Right ventricle myocardium inferior (tissue), 1 donor: ENCODE measurements at regions of chr3 and their contacts with region 1.

Region 1: GRCh38 chr3:142394921-142395622 is 52.8 kb downstream of the XRN1 start:
- DNase-seq: no peak
- ATAC-seq: peak; percentile 68

Region 2: DNA sequence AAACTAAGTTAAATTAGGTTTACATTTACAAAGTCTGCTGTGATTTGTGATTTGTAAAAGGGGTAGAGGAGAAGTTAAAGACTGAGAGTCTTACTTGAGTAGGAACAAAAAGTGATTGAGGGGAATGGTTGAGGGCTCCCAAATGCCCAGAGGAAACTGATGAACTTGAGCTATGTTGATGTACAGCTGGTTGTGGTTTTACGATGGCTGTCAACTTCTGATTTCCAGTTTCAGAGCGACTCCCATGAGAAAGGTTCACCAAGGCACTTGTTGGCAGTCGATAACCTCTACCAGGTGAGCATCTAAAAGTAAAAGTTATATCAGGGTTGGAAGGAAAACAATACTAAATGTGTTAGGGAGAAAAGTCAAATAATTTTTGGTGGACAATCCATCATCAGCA is 38.3 kb before region 1 on chr3:
- intact Hi-C with region 1: loop called (anchors 10 kb)
- DNase-seq: no peak
- ATAC-seq: no peak

Region 3: DNA sequence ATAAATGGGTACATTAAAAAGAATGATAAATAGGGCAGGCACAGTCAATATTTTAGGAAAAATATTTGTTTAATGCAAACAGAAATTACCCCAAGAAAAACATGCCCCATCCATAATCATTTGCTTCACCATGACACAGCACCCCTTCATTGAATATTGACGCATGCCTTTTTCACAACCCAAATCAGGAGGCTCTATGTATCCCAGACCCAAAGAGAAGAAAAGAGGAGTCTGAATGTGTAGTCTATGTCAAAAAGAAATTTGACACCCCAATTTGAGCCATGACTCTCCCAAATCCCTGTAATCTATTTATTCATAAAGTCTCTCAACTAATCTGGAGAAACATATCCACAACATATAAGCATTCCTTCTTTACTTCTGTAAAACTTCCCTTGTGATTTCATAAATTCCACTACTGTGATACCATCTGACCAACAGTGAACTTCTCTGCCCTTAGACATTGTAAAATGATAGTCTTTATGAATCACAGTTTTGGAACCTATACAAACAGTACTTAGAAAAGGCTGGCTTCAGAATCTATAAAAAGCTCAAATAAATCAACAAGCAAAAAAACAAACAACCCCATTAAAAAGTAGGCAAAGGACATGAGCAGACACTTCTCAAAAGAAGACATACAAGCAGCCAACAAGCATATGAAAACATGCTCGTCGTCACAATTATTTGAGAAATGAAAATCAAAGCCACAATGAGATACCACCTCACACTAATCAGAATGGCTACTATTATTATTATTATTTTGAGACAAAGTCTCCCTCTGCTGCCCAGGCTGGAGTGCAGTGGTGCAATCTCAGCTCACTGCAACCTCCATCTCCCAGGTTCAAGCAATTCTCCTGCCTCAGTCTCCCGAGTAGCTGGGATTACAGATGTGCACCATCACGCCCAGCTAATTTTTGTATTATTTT is 106.2 kb after region 1 on chr3:
- intact Hi-C with region 1: no loop called
- DNase-seq: no peak
- ATAC-seq: no peak